ENCODE measurements at regions of chr2 and their contacts with region 1.

Region 1: DNA sequence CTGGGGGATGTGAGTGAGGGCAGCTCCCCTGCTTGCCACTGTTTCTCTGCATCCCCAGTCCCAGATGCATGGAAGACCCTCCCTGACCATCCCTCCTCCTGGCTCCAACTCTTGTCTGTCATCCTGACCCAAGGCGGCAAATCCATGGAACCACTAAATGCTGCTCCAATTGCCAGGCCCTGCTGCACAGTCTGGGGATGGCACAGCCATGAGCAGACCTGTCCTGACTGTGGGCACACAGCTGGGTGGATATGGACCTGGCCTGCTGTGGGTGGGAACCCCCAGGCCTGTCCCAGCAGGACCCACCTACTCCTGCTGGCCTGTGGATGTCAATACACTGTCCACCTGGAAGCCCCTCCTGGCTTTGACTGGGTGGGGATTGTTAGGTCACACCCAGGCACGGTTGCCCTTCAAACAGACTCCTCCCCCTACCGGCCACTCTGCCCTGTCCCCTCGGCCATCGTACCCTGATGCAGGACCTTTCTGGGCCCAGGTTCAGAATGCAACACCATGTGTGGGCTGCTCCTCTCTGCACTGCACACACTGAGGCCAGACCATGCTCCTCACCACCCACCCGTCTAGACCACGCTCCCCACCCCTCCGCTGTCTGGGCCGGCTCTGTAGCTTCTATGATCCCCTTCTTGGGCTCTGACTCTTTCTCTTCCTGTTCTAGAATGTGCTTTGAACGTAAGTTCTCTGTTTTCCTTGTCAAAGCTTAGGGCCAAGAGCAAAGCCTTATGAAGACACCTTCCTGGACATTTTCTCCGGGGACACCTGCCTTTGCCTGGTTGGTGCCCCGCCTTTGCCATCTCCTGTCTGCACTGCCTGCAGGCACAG is 57.9 kb downstream of the INPP5D start:
- DNase-seq: peak in 1 of 2 donors; percentile 31
- H3K4me3 ChIP-seq: no peak overlapping the region
- H3K27ac ChIP-seq: no peak overlapping the region
- H3K4me1 ChIP-seq: no peaks in the 10 kb centered on the region
- H3K27me3 ChIP-seq: no peaks in the 10 kb centered on the region
- CTCF ChIP-seq: no peak
- POLR2A ChIP-seq: no peak

Region 2: DNA sequence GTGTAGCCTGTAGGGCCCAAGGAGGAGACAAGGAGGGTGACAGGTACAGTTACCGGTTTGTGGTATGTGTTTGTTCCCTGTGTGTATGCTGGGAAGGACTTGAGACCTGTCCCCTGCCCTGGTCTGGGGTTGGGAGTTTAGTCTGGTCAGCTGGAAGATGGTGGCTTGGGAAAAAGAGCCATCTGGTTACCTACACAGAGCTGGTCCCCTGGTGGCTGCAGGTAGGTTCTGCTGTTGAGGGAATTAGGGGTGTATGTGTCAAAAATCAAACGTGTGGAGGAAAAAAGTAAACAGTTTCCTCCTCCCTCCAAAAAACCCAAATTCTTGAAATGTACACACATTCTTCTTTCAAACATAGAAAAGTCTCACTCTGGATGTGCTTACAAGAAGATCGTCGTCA is 1385.4 kb before region 1 on chr2:
- intact Hi-C with region 1: no loop called
- DNase-seq: no peak
- H3K4me3 ChIP-seq: no peak overlapping the region
- H3K27ac ChIP-seq: no peak overlapping the region
- H3K4me1 ChIP-seq: no peaks in the 10 kb centered on the region
- H3K27me3 ChIP-seq: no peaks in the 10 kb centered on the region
- CTCF ChIP-seq: no peak
- POLR2A ChIP-seq: no peak

Region 3: DNA sequence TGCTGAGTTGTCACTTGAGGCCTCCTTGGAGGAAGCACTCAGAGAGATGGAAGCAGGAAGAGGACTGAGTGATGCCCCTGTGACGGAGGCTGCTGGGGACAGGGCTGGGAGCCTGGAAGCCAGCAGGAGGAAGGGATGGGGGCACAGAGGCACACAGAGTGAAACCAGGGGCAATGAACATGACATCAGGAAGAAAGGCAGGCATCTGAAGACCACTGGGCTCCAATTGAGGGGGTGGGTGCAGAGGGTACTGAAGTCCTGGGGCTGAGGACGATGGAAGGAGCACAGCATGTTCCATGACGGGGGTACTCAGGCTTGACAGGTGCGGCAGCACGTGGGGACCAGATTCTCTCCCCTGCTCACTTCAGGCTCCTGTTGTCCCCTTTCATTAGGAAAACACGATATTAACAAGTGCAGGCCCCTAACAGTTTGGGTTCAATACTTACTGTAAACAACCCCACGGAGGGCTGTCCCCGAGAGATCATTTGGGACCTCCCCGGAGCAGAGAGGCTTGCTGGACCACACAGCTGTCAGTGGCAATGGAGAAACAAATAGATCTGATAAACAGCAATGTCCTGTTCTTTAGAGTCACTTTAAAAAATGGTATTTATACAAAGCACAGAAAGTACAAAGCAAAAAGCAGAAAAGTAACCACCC is 49.1 kb before region 1 on chr2:
- intact Hi-C with region 1: loop called (anchors 1 kb)
- DNase-seq: peak in 1 of 2 donors; percentile 19
- H3K4me3 ChIP-seq: no peak overlapping the region
- H3K27ac ChIP-seq: no peak overlapping the region
- H3K4me1 ChIP-seq: no peaks in the 10 kb centered on the region
- H3K27me3 ChIP-seq: no peaks in the 10 kb centered on the region
- CTCF ChIP-seq: no peak
- POLR2A ChIP-seq: no peak

Measured in breast epithelium (tissue), 4 donors.